PC-9 (cell line): ENCODE measurements at regions of chr2 and their contacts with region 1.

Region 1: DNA sequence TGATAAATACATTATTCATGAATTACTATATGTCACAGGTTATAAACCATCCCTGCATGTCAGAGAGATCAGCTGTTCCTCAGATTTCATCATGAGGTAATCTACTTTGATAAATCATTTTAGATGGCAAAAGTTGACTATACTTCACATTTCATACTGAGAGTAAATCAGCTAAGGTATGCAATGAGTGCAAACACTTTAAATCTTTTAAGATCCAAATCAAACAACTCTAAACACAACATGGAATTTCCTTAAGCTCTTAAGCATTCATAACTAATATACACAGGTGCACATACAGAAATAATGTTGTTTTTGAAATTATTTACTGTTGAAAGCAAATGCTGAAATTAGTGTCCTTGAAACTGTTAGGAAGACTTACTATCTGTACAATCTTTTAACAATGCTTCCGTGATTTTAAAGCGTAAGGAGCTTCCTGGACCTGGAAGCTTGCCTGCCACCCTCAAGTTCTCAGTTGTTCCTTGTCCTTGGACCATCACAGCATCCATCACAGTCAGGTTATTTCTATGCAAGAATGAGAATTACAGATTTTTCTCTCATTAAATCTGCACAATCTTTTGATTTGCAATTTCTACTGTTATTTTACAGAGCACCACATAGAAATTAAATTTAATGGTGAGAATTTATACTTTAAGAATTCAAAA is 83.2 kb downstream of the ZAP70 start:
- DNase-seq: no peak
- H3K4me3 ChIP-seq: no peak overlapping the region
- H3K27ac ChIP-seq: no peak overlapping the region
- H3K4me1 ChIP-seq: no peaks in the 10 kb centered on the region
- H3K27me3 ChIP-seq: no peaks in the 10 kb centered on the region
- CTCF ChIP-seq: no peak

Region 2: DNA sequence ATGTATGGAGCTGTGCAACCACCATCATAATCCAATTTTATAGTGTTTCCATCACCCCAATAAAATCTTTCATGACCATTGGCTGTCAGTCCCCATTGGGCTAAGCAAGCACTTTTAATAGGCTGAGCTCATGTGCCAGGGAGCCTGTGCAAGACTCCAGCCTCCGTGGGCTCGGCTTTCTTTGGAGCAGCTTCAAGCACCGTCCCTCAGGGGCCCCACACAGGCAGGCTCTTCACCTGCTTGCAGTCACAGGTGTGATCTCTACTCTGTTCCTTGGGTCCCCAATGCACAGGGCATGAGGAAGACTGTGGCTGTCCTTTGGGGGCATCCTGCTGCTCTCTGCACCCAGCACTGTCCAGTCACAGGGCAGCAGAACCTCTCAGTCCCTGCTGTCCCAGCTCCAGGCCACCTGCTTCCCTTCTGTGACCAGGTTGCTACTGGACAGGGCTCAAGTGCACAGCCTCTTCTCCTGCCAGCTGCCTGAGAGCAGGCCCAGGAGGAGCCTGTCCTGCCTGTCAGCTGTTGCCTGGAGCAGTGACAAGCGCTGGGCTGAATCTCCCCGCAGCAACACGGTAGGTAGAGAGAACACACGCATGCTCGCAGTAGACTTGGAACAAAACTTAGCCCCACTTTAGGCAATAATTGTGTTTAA is 239.9 kb after region 1 on chr2:
- CTCF ChIA-PET with region 1: no interaction called
- POLR2A ChIA-PET with region 1: no interaction called
- intact Hi-C with region 1: no loop called
- DNase-seq: no peak
- H3K4me3 ChIP-seq: no peak overlapping the region
- H3K27ac ChIP-seq: no peak overlapping the region
- H3K4me1 ChIP-seq: no peaks in the 10 kb centered on the region
- H3K27me3 ChIP-seq: no peaks in the 10 kb centered on the region
- CTCF ChIP-seq: no peak

Region 3: DNA sequence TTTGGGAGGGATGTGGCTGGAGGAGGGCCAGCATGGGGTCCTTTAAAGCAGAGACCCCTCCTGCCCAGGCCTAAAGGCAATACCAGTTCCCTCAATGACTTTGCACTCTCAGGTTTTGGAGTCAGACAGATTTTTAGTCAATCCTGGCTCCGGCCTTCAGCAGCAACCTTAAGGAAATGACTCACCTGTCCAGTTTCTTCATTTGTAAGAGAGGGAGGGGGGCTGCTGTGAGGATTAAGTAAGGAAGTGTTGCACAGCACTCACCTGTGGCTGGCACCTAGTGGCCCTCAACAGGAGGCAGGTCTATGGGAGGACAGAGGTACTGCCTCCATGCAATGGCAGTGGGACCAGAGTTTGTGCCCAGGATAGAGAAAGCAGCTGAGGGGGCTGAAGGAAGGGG is 563.4 kb after region 1 on chr2:
- CTCF ChIA-PET with region 1: no interaction called
- POLR2A ChIA-PET with region 1: interaction called, 13 read pairs
- intact Hi-C with region 1: no loop called
- DNase-seq: peak in 1 of 2 experiments; percentile 80
- H3K4me3 ChIP-seq: no peak overlapping the region
- H3K27ac ChIP-seq: peak overlapping the region; percentile 64
- H3K4me1 ChIP-seq: peaks cover 37% of the 10 kb centered on the region
- H3K27me3 ChIP-seq: no peaks in the 10 kb centered on the region
- CTCF ChIP-seq: no peak